Mammary epithelial cell (primary cell): ENCODE measurements at regions of chr4 and their contacts with region 1.

Region 1: GRCh38 chr4:154686838-154687237 is 57.0 kb upstream of the LRAT start:
- DNase-seq: peak; percentile 9
- H3K4me3 ChIP-seq: no peak overlapping the region
- H3K27ac ChIP-seq: no peak overlapping the region
- H3K4me1 ChIP-seq: no peaks in the 10 kb centered on the region
- H3K27me3 ChIP-seq: no peaks in the 10 kb centered on the region
- CTCF ChIP-seq: peak; percentile 31 to 42

Region 2: DNA sequence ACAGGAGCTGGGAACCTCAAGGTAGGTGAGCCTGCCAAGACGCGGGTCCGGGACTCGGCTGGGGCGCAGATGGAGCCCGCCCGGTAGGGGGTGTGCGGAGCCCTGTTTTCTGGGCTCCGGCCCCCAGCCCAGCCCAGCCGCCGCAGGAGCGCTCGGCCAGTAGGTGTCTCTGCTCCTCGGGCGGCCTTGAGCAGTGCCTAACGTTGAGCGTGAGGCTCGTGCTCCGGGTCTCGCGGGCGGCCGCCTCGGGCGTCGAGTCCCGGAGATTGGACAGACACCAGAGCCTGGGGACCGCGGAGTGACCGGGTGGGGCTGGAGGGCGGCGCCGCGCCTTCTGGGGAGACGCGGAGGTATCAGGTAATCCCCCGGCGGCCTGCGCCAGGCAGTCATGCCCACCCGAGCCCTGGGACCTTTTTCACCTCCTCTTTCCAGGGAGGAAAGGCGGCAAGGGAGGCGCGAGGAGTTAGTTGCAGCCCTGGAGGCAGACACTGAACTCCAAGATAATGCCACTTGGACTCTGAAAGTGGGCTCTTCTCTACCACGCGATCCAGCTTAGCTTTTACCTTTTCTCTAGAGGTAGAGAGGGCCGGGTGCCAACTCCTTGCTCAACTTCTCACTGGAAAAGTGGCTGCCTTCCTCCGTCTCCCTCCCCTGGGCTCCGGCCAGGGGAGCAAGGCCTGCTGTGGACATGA is 59.9 kb before region 1 on chr4:
- CTCF ChIA-PET with region 1: no interaction called
- dilution Hi-C with region 1: no loop called
- in situ Hi-C with region 1: no loop called
- intact Hi-C with region 1: loop called (anchors 5 kb)
- DNase-seq: peak; percentile 65
- H3K4me3 ChIP-seq: peak overlapping the region; percentile 27 to 51 (median 48)
- H3K27ac ChIP-seq: no peak overlapping the region
- H3K4me1 ChIP-seq: peaks cover 17% of the 10 kb centered on the region
- H3K27me3 ChIP-seq: no peaks in the 10 kb centered on the region
- CTCF ChIP-seq: peak; percentile 60 to 85

Region 3: DNA sequence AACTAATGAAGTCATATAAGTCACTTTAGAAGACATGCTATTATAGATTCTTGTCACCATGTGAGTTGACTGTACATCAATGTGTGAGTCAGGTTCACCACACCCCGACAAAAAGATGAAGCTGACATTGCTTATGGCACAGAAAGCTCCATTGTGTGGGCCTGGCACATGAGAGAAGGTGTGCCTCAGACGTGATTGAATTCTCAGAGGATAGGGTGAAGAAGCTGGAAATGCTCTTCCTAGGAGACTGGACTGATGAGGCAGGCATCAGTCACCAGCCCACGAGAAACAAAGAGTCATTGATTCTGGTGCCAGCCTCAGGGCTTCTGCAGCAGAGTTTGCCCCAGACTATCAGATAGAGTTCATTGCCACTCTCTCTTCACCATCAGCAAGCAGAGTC is 21.0 kb after region 1 on chr4:
- CTCF ChIA-PET with region 1: interaction called, 6 read pairs
- dilution Hi-C with region 1: no loop called
- in situ Hi-C with region 1: no loop called
- intact Hi-C with region 1: loop called (anchors 1 kb)
- DNase-seq: peak; percentile 100
- H3K4me3 ChIP-seq: no peak overlapping the region
- H3K27ac ChIP-seq: peak overlapping the region; percentile 100
- H3K4me1 ChIP-seq: peaks cover 31% of the 10 kb centered on the region
- H3K27me3 ChIP-seq: no peaks in the 10 kb centered on the region
- CTCF ChIP-seq: no peak

Region 4: DNA sequence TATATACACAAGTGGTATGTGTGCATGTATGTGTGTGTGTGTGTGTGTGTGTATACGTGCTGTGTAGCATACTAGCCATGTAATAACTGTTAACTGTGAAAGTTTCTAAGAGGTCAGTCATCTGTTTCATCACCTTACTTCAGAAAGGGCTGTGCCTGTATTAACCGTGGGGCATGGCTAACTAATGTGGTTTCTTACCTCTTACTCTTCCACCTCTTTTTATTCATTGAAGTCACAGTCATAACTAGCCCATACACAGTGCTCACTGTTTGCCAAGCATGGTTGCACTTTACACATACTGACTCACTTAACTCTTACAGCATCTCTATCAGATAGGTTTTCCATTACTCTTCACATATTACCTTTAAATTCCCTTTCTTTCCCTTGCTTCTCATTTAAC is 33.3 kb after region 1 on chr4:
- CTCF ChIA-PET with region 1: interaction called, 9 read pairs
- dilution Hi-C with region 1: no loop called
- in situ Hi-C with region 1: no loop called
- intact Hi-C with region 1: loop called (anchors 1 kb)
- DNase-seq: peak; percentile 98
- H3K4me3 ChIP-seq: no peak overlapping the region
- H3K27ac ChIP-seq: peak overlapping the region; percentile 100
- H3K4me1 ChIP-seq: peaks cover 47% of the 10 kb centered on the region
- H3K27me3 ChIP-seq: no peaks in the 10 kb centered on the region
- CTCF ChIP-seq: no peak

Region 5: GRCh38 chr4:154743683-154744340 is 57.0 kb after region 1 on chr4 and contains the start of gene LRAT:
- CTCF ChIA-PET with region 1: interaction called, 5 read pairs
- dilution Hi-C with region 1: no loop called
- in situ Hi-C with region 1: no loop called
- intact Hi-C with region 1: loop called (anchors 2 kb)
- DNase-seq: peak; percentile 89
- H3K4me3 ChIP-seq: peak within 1 kb of the TSS; percentile 63 to 76 (median 74)
- H3K27ac ChIP-seq: peak within 1 kb of the TSS; percentile 60
- H3K4me1 ChIP-seq: peaks cover 15% of the 10 kb centered on the region
- H3K27me3 ChIP-seq: no peaks in the 10 kb centered on the region
- CTCF ChIP-seq: peak; percentile 36 to 66
- total RNA-seq, gene LRAT: 16.6 to 22.2 TPM

Region 6: DNA sequence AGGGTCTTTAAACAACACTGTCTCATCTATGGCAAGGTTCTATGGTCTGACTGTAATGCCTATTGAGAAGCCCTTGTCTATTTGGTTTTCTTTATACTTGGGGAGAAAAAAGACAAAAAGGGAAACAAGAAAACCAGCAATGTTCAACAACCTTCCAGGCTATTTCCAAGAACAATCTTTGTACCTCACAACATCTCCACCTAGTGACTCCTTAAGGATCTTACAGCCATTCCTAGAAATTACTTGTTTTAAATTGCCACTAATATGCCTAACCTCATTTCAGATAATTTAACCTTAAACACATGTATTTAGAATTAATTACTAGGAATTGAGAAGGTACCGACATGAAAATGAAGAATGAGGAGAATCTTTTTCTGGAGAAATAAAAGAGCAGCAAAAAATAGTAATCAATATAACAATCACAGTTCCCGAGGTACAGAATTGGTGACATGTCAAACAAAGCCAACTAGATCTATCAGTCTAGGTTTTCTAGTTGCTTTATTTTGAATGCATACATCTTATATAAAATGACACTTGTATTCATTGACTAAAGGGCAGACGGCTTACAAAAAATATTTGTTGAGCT is 92.6 kb after region 1 on chr4:
- CTCF ChIA-PET with region 1: interaction called, 21 read pairs
- dilution Hi-C with region 1: no loop called
- in situ Hi-C with region 1: loop called (anchors 5 to 10 kb)
- intact Hi-C with region 1: loop called (anchors 1 kb)
- DNase-seq: peak; percentile 29
- H3K4me3 ChIP-seq: no peak overlapping the region
- H3K27ac ChIP-seq: no peak overlapping the region
- H3K4me1 ChIP-seq: no peaks in the 10 kb centered on the region
- H3K27me3 ChIP-seq: no peaks in the 10 kb centered on the region
- CTCF ChIP-seq: peak; percentile 57 to 70